ENCODE measurements at regions of chr10 and their contacts with region 1.

Region 1: DNA sequence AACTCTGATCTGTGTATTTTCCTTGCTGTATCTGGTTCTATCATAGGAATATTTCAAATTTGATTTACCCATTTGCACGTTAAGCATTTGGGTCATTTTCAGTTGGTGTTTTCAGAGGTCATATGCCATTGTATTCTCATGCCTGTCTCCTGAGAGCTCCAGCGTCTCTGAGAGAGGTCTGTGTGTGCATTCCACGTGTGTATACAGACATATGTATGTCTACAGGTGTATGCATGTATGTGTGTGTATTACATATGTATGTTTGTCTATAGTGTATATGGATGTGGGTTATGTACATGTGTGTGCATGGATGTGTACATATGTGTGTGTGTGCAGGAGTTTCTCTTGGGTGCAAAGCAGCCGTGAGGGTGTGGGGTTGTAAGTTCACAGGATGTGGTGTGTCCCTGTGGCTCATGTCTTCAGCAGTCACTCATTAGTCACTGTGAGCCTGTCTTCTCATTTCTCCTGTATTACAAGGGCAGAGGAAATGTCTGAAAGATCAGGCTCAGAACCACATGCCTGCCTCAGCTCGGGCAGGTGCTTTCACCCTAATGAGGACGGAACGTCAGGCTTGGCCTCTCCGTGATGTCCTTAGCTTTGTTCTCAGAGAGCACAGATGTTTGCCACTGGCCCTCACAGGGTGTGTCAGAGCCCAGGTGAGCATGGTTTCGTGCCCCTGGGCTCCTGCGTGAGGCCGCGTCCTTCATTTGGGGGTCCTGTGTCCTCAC is 101.6 kb downstream of the NKX6-2 start:
- DNase-seq: peak; percentile 75
- ATAC-seq: peak; percentile 94
- H3K4me3 Mint-ChIP-seq: no peak overlapping the region
- H3K27ac Mint-ChIP-seq: peak overlapping the region; percentile 30
- H3K4me1 Mint-ChIP-seq: peaks cover 19% of the 10 kb centered on the region
- H3K27me3 Mint-ChIP-seq: no peaks in the 10 kb centered on the region

Region 2: GRCh38 chr10:132654702-132655661 is 29.3 kb before region 1 on chr10:
- CTCF ChIA-PET with region 1: interaction called, 10 read pairs
- POLR2A ChIA-PET with region 1: no interaction called
- DNase-seq: peak; percentile 68
- ATAC-seq: peak; percentile 68
- H3K4me3 Mint-ChIP-seq: no peak overlapping the region
- H3K27ac Mint-ChIP-seq: no peak overlapping the region
- H3K4me1 Mint-ChIP-seq: no peaks in the 10 kb centered on the region
- H3K27me3 Mint-ChIP-seq: no peaks in the 10 kb centered on the region